Gastrocnemius medialis (tissue), 4 donors: ENCODE measurements at regions of chr22 and their contacts with region 1.

Region 1: DNA sequence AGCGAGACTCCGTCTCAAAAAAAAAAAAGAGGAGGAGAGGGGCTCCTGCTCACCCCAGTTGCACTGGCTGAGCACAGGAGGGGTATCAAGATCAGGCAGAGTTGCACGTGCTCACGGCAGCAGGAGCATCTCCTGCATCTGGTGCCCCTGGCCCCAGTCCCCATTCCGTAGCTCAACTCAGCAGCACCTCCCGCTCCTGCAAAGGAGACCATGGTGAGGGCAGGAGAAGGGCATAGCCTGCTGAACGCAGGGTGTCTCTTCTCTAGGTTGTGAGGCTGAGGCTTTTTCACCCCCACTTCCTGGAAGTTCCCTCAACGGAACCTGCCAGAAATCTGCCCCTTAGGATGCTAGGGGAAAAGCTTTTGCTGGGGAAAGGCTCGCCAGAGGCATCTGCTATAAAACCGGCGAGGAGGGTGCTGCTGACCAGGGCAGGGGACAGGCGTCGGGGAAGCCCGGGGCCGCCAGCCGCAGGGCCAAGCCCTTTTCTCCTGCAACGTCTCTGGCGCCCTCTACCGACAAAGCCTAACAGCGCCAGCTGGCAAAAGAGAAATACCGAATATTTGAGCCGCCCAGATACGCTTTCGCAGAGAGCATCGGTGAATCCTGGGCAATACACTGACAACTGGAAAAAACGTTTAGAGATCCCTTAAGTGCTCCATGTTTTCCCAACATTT is 1.0 kb upstream of the PPP6R2 start:
- DNase-seq: peak; percentile 74 to 86
- ATAC-seq: peak; percentile 85 to 90
- H3K4me3 ChIP-seq: peak overlapping the region; percentile 69 to 88 (median 75)
- H3K27ac ChIP-seq: peak overlapping the region; percentile 71 to 92 (median 88)
- H3K4me1 ChIP-seq: peaks cover 9 to 18% of the 10 kb centered on the region in 2 donors
- H3K27me3 ChIP-seq: no peaks in the 10 kb centered on the region
- CTCF ChIP-seq: peak; percentile 89 to 98 (median 97)
- POLR2A ChIP-seq: no peak

Region 2: DNA sequence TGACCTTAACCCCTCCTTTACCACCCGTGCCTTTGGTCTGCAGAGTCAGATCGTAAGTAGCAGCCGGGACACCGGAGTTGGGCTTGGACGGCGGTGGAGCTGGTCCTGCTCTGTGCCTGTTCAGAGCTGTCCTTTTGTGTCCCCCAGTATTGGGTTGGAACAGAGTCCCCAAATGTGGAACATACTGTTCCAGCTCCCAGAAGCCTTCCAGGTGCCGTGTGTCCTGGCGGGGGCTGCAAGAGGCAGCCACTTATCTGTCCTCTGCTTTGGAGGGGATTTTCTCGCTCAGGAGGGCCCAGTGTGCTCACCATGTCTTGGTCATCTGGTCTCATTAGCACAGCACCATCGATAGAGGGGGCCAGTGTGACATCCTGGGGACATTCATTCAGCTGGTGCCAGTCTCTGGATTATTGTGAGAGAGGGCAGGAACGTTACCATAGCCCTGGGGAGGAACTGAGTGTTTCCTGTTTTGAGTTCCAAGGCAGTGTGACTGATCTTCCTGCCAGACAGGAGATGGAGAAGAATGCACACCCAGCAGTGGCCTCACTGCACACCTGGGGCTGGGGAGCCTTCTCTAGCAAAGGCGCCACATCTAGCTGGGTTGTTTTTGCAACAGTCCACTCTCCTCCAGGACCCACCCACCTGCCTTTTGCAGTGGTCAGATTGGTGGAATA is 411.2 kb before region 1 on chr22:
- in situ Hi-C with region 1: no loop called
- intact Hi-C with region 1: loop called (anchors 5 kb)
- DNase-seq: peak; percentile 80 to 86
- ATAC-seq: peak; percentile 50 to 77
- H3K4me3 ChIP-seq: no peak overlapping the region
- H3K27ac ChIP-seq: peak overlapping the region; percentile 64 to 99 (median 96)
- H3K4me1 ChIP-seq: peaks cover 42 to 48% of the 10 kb centered on the region in 2 donors
- H3K27me3 ChIP-seq: peaks cover 0 to 7% (median 4%) of the 10 kb centered on the region in 3 donors
- CTCF ChIP-seq: peak; percentile 31 to 77 (median 65)
- POLR2A ChIP-seq: no peak

Region 3: DNA sequence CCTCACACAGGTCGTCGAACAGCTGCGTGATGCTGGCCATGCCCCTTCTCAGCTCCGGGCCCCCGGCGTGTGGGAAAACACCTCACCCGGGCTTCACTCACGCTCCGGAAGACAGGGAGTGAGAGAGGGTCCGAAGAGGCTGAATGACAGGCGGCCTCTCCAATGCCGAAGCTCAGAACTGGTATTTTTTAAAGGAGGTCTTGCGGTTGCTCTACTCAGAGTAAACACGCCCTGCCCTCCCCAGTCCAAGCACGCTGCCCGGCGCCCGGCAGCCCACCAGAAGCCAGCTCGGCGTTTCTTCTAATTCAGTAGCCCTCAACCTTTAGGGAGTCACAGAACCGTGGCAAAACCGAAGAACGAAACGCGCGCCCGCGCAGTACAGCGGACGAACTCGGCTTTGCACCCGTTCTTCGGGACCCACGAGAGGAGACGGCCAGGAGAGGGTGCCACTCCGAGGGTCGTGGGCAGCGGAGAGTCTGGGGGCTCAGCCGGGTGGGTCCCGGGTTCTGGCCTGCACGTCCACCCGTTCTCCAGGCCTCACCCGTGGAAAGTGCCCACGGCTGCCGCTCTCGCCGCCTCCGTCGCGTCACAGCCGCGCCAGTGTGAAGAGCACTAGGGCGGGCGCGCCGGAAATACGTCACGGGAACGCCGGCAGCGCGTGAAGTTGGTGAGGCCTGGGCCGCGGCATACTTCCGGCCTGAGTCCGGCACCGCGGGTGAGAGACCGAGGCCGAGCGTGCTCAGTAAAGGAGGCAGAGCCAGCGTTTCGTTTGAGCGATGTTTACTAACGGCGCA is 97.5 kb before region 1 on chr22 and contains the start of gene TUBGCP6:
- in situ Hi-C with region 1: no loop called
- intact Hi-C with region 1: loop called (anchors 1 kb)
- DNase-seq: peak; percentile 84 to 90
- ATAC-seq: peak; percentile 79 to 80
- H3K4me3 ChIP-seq: peak within 1 kb of the TSS; percentile 74 to 98 (median 81)
- H3K27ac ChIP-seq: peak within 1 kb of the TSS; percentile 88 to 98 (median 90)
- H3K4me1 ChIP-seq: peaks cover 43 to 46% of the 10 kb centered on the region in 2 donors
- H3K27me3 ChIP-seq: no peaks in the 10 kb centered on the region
- CTCF ChIP-seq: peak; percentile 24 to 43 (median 37)
- POLR2A ChIP-seq: peak; percentile 70 to 81
- total RNA-seq, gene TUBGCP6: 18.7 to 27.4 (median 19.2) TPM

Region 4: DNA sequence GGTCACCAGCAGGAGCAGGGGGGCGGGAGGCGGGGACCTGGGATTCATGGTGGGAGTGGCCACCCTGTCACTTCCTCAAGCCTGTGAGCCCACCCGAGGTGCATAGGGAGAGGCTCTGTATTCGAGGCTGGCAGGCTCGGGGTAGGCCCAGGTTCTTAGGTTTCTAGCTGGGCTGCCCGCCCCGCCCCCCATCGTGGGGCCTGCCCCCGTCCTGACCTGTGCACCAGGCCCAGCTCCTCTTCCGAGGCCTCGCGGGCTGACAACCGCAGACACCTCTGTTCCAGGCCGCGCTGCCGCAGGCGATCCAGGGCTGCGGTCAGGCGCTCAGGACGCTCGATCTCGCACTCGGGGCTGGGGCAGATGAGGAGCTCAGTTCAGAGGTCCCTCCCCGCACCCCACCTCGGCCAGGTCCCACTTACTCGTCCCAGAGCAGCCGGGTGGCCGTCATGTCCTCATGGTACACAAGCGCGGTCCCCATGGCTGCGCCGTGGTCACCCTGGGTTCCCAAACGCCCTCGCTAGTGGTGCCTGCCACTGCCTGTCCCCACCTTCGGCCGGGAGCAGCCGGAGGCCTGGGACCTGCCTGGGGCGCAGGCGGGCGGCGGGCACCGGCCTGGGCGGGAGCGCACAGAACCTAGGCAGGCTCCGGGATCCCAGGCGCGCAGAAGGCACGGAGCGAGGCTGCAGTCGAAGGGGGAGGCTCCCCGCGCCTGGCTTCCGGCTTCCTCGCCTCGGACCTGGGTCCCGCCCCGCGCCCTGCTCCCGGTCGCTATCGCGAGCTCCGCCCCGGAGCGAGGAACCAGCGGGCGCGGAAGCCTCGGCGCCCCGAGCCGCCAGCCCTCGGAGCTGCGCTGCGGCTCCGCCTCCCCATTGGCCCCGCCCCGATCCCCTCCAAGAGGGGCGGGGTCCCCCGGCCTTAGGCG is 91.3 kb before region 1 on chr22 and contains the start of gene HDAC10:
- in situ Hi-C with region 1: loop called in 1 of 4 experiments (anchors 10 kb)
- intact Hi-C with region 1: no loop called
- DNase-seq: peak in 1 of 2 donors; percentile 43
- ATAC-seq: peak; percentile 11 to 30
- H3K4me3 ChIP-seq: peak within 1 kb of the TSS; percentile 59 to 68 (median 62)
- H3K27ac ChIP-seq: peak within 1 kb of the TSS; percentile 62 to 97 (median 75)
- H3K4me1 ChIP-seq: peaks cover 18 to 30% of the 10 kb centered on the region in 2 donors
- H3K27me3 ChIP-seq: no peaks in the 10 kb centered on the region
- CTCF ChIP-seq: no peak
- POLR2A ChIP-seq: no peak
- total RNA-seq, gene HDAC10: 4.1 to 24.9 (median 8.6) TPM

Region 5: GRCh38 chr22:50276143-50276542 is 66.0 kb before region 1 on chr22:
- in situ Hi-C with region 1: no loop called
- intact Hi-C with region 1: loop called (anchors 2 kb)
- DNase-seq: no peak
- ATAC-seq: peak; percentile 6 to 40
- H3K4me3 ChIP-seq: no peak overlapping the region
- H3K27ac ChIP-seq: no peak overlapping the region
- H3K4me1 ChIP-seq: peaks cover 4 to 12% of the 10 kb centered on the region in 2 donors
- H3K27me3 ChIP-seq: peaks cover 2 to 7% (median 4%) of the 10 kb centered on the region in 3 donors
- CTCF ChIP-seq: peak in 2 of 5 experiments; percentile 28 to 46
- POLR2A ChIP-seq: no peak

Region 6: GRCh38 chr22:50361688-50362087 is 19.6 kb after region 1 on chr22:
- in situ Hi-C with region 1: no loop called
- intact Hi-C with region 1: no loop called
- DNase-seq: no peak
- ATAC-seq: no peak
- H3K4me3 ChIP-seq: no peak overlapping the region
- H3K27ac ChIP-seq: peak overlapping the region in 1 of 4 donors; percentile 30
- H3K4me1 ChIP-seq: peaks cover 0 to 14% of the 10 kb centered on the region in 2 donors
- H3K27me3 ChIP-seq: no peaks in the 10 kb centered on the region
- CTCF ChIP-seq: no peak
- POLR2A ChIP-seq: no peak